PC-3 (cell line): ENCODE measurements at regions of chr9 and their contacts with region 1.

Region 1: DNA sequence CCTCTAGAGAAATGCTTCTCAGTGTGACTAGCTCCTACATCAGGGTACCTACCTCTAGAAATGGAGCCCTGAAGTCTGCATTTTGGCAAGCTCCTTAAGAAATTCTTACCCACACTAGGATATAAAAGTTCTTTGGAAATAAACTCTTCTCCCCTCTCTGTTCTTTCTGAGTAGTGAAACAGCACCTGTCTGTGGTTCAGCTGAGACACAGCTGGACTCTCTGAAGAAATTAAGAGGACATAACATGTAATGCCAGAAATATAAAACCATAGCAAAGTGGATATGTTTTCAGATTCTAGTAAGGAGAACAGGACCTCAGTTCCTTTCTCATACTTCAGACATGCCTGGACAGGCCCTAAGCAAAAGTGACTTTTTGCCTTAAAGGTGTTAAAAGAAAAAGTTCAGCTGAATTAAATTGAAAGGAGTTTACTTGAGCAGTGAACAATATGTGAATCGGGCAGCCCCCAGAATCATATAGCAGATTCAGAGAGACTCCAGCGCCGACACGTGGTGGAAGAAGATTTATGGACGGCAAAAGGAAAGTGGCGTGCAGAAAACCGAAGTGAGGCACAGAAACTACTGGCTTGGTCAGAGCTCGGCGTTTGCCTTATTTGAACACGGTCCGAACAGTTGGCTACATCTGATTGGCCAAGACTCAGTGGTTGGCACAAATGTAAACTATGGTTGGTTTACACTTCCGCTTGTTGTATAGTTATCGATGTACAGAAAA is 64.5 kb downstream of the PRKACG start:
- DNase-seq: peak; percentile 24
- ATAC-seq: peak; percentile 24; the same call in 1 of the 2 replicates
- H3K4me3 ChIP-seq: no peak overlapping the region
- H3K27ac ChIP-seq: no peak overlapping the region
- H3K4me1 ChIP-seq: no peaks in the 10 kb centered on the region
- H3K27me3 ChIP-seq: peaks cover 45% of the 10 kb centered on the region
- CTCF ChIP-seq: peak; percentile 47; the same call in 1 of the 2 replicates

Region 2: DNA sequence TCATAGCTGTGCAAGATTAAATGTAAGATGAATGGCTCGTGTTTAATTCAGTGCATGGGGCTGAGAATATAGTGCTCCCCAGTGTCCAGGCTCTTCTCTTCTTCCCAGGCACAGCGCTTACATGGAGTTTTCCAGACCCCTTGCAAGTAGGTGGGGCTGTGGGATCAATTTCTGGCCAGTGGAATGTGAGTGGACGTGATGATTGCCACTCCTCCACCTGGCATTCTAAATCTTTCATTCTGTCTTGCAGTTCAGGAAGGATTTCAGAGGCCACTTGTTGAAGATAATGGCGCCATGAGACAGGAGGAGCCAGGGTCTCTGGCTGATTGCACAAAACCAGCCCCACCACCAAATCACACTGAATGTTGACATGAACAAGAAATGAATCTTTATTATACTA is 251.6 kb before region 1 on chr9:
- CTCF ChIA-PET with region 1: no interaction called
- POLR2A ChIA-PET with region 1: no interaction called
- intact Hi-C with region 1: loop called (anchors 5 kb)
- DNase-seq: no peak
- ATAC-seq: no peak
- H3K4me3 ChIP-seq: no peak overlapping the region
- H3K27ac ChIP-seq: no peak overlapping the region
- H3K4me1 ChIP-seq: no peaks in the 10 kb centered on the region
- H3K27me3 ChIP-seq: peaks cover 72% of the 10 kb centered on the region
- CTCF ChIP-seq: no peak

Region 3: DNA sequence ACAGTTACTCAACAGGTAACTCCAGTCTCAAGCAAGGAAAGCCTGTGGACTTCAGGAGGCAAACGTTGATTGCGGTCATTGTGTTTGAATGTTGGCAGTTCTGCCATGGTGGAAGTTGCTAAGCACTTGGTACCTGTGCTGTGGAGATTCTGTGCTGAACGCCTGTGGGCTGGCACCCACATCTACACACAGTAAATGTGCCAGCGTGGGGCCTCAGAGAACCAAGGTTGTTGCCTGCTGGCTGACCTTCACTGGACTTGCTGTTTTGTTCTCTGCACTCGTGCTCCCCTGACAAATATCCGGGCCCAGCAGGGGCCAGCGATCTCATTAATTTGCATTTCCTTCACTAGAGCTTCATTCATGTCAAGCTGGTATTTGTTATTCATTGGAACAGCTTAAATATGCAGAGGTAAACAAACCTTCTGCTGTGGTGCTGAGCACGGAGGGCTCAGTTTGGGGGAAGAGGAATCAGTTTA is 77.4 kb before region 1 on chr9:
- CTCF ChIA-PET with region 1: no interaction called
- POLR2A ChIA-PET with region 1: no interaction called
- intact Hi-C with region 1: no loop called
- DNase-seq: no peak
- ATAC-seq: no peak
- H3K4me3 ChIP-seq: no peak overlapping the region
- H3K27ac ChIP-seq: no peak overlapping the region
- H3K4me1 ChIP-seq: no peaks in the 10 kb centered on the region
- H3K27me3 ChIP-seq: peaks cover 61% of the 10 kb centered on the region
- CTCF ChIP-seq: no peak

Region 4: DNA sequence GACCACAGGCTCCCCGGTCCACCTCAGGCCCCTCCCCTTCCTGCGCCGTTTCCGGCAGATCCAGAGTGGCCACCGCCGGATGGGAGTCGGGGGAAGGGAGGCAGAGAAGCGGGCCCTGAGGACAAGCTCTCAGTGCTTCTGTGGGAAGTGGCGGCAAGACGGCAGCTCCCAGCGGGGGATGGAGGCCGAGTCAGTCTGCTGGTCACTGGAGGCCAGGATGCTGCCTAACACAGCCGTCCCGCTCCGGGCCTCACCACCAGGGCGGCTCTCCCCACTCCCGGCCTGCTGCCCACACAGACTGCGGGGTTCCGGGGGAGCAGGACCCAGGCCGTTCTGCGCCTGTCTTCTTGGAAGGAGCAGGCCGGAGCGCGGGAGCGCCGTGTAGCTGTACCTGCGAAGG is 117.5 kb after region 1 on chr9:
- CTCF ChIA-PET with region 1: no interaction called
- POLR2A ChIA-PET with region 1: no interaction called
- intact Hi-C with region 1: no loop called
- DNase-seq: no peak
- ATAC-seq: no peak
- H3K4me3 ChIP-seq: no peak overlapping the region
- H3K27ac ChIP-seq: no peak overlapping the region
- H3K4me1 ChIP-seq: no peaks in the 10 kb centered on the region
- H3K27me3 ChIP-seq: no peaks in the 10 kb centered on the region
- CTCF ChIP-seq: no peak